Cardiac septum (tissue), 1 donor: ENCODE measurements at regions of chr17 and their contacts with region 1.

Region 1: GRCh38 chr17:75199886-75200618 is 5.4 kb upstream of the NUP85 start:
- DNase-seq: no peak

Region 2: GRCh38 chr17:74961657-74962490 is 238.2 kb before region 1 on chr17:
- intact Hi-C with region 1: loop called (anchors 5 kb)
- DNase-seq: peak; percentile 90

Region 3: DNA sequence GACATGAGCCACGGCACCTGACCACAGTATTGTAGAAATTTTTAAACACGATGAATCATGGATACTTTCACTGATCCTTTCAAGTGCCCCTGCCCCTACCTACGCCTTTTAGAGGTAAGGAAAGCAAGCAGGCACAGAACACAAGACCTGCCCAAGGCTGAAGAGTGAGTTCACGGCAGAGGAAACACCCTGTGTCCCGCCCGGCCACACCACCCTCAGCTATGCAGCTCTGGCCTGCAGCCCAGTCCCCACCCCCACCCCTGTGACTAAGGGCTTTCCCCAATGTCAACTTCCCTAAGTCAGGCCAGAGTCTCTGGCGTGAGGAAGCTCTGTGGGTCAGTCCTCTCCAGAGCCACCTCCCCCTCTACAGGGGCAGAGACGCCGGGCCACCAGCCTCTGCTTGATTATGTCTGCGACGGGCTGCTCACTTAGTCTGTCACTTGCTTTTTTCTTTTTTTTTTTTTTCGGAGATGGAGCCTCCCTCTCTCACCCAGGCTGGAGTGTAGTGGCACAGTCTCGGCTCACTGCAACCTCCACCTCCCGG is 103.9 kb before region 1 on chr17:
- intact Hi-C with region 1: no loop called
- DNase-seq: peak; percentile 91